Posterior cingulate gyrus (tissue), 11 donors: ENCODE measurements at regions of chr1 and their contacts with region 1.

Region 1: GRCh38 chr1:198088360-198089071 is 68.3 kb upstream of the NEK7 start:
- DNase-seq: no peak

Region 2: DNA sequence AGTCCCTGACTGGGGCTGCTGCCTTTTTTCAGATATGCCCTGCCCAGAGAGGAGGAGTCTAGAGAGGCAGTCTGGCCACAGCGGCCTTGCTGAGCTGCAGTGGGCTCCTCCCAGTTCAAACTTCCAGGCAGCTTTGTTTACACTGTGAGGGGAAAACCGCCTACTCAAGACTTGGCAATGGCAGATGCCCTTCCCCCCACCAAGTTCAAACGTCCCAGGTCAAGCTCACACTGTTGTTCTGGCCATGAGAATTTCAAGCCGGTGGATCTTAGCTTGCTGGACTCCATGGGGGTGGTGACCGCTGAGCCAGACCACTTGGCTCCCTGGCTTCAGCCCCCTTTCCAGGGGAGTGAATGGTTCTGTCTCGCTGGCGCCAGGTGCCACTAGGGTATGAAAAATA is 204.3 kb before region 1 on chr1:
- intact Hi-C with region 1: no loop called
- DNase-seq: no peak

Region 3: GRCh38 chr1:198359024-198359653 is 270.6 kb after region 1 on chr1:
- intact Hi-C with region 1: loop called (anchors 1 kb)
- DNase-seq: no peak